ENCODE measurements at regions of chr6 and their contacts with region 1.

Region 1: GRCh38 chr6:89122625-89123024 is 4.8 kb upstream of the SRSF12 start:
- DNase-seq: peak; percentile 27
- H3K4me3 ChIP-seq: no peak overlapping the region
- CTCF ChIP-seq: peak; percentile 63

Region 2: DNA sequence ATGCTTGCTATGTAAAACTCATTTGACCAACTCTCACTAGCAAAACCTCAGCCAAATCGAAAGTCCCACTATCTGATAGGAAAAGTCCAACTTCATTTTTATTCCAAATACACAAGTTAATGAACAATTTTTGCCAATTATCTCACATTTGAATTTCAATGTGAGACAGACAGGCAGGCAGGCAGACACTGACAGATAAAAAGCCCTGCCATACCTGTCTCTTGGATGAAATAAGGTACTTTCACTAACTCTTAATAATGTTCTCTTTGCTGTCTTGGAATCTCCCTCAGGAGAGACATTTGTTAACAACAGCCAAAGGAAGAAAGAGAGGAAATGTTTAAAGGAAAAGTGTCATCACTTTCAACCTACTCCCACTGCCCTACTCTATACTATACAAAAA is 241.2 kb before region 1 on chr6:
- in situ Hi-C with region 1: no loop called
- DNase-seq: no peak
- H3K4me3 ChIP-seq: no peak overlapping the region
- CTCF ChIP-seq: no peak

Region 3: DNA sequence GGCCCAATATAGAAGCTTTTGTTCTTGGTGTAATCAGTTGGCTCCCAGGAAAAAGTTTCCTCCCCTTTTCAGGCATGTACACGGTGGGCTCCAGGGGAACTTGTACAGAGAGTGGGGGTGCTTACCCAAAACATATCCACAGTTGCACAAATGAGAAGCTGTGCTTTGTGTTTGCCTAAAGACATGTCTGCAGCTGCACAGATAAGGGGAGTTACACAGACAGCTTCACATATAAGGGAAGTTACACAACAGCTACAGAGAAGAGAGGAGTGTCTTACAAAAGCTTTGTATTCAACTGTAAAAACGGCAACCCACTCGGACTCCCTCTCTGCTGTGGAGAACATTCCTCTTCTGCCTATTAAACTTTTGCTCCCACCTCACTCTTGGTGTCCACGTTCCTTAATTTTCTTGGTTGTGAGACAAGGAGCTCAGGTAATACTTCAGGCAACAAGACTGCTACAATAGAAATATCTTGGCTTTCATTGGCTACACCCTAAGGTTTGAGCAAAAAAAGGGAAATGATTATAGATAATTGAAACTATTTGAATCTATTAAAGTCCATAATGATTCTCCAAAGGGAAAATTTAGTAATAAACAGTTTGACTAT is 49.5 kb before region 1 on chr6:
- in situ Hi-C with region 1: no loop called
- DNase-seq: no peak
- H3K4me3 ChIP-seq: no peak overlapping the region
- CTCF ChIP-seq: no peak

Region 4: GRCh38 chr6:89084954-89085353 is 37.7 kb before region 1 on chr6:
- in situ Hi-C with region 1: loop called (anchors 5 kb)
- DNase-seq: no peak
- H3K4me3 ChIP-seq: no peak overlapping the region
- CTCF ChIP-seq: no peak

Region 5: DNA sequence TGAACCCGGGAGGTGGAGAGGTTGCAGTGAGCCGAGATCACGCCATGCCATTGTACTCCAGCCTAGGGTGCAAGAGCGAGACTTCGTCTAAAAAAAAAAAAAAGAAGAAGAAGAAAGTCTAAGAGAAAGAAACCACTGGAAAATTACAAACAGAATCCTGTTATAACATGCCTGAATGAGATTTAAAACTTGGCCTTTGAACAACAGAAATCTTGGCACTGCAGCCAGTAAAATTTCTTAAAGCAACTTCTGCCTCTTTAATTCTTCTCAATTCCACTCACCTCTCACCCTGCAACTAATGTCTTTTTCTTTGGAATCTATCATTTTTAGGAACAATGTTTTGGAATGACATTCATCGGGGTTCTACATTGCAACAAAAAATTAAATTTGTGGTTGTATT is 49.5 kb after region 1 on chr6:
- in situ Hi-C with region 1: no loop called
- DNase-seq: no peak
- H3K4me3 ChIP-seq: no peak overlapping the region
- CTCF ChIP-seq: no peak

Region 6: DNA sequence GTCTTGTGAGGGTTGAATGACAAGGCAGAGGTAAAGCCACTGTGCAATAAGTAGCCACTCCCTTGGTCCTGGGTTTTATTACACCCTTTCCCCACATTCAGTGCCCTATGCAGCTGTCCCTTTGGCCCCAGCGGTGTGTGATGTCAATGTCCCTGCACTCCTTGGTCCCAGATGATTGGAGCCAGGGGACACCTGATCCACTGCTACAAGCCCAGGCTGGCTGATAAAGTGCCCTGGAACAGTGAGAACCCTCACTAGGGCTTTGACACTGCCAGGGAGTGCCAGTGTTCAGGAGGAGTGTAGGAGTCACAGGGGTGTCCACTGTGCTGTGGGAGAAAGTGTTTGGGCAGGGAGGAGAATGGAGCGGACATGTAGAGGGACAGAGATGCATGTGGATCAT is 64.1 kb after region 1 on chr6:
- in situ Hi-C with region 1: no loop called
- DNase-seq: no peak
- H3K4me3 ChIP-seq: no peak overlapping the region
- CTCF ChIP-seq: no peak

Measured in astrocyte of the cerebellum (primary cell).